ENCODE measurements at regions of chr11 and their contacts with region 1.

Region 1: GRCh38 chr11:43282607-43283440 is 29.0 kb upstream of the API5 start:
- DNase-seq: peak; percentile 60
- ATAC-seq: peak; percentile 21; the same call in 1 of the 2 replicates
- H3K4me3 Mint-ChIP-seq: no peak overlapping the region
- H3K27ac Mint-ChIP-seq: no peak overlapping the region
- H3K4me1 Mint-ChIP-seq: peaks cover 14% of the 10 kb centered on the region
- H3K27me3 Mint-ChIP-seq: no peaks in the 10 kb centered on the region; the same call in 1 of the 2 replicates
- CTCF ChIP-seq: peak; percentile 93

Region 2: DNA sequence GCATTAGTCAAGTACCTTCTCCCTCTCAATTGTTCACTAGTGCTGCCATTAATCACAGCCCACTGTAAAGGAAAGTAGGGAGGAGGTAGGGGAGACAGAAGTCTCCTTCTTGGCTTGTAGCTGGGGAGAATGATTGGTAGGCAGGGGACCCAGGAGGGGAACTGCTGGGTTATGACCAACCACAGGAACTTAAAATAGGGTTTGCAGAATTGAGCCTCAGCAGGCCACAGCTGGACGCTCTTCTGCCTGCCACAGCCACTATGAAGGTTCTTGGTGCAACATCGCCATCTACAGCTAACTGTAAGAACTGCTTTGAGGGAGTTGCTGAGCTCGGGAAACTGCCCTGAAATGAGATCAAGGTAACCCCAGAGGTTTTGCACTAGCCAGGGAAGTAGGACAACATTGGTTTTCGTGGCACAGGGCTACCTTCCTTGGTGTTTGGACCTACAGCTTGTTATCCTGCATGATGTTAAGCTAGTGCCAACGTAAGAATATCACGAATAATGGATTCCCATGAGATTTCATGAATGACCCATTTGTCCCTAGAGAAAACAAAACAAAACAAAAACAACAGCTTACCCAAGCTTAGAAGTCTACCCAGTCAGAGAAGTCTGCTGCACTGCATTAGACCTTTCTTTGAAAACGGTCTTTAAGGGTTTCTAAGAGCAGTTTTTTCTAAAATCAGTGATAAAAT is 758.1 kb before region 1 on chr11:
- CTCF ChIA-PET with region 1: interaction called, 10 read pairs
- POLR2A ChIA-PET with region 1: no interaction called
- DNase-seq: peak; percentile 59
- ATAC-seq: peak; percentile 90
- H3K4me3 Mint-ChIP-seq: no peak overlapping the region
- H3K27ac Mint-ChIP-seq: no peak overlapping the region
- H3K4me1 Mint-ChIP-seq: peaks cover 27% of the 10 kb centered on the region
- H3K27me3 Mint-ChIP-seq: no peaks in the 10 kb centered on the region
- CTCF ChIP-seq: peak; percentile 81

Region 3: GRCh38 chr11:42770444-42771065 is 512.3 kb before region 1 on chr11:
- CTCF ChIA-PET with region 1: interaction called, 12 read pairs
- POLR2A ChIA-PET with region 1: no interaction called
- DNase-seq: peak; percentile 33
- ATAC-seq: peak; percentile 79
- H3K4me3 Mint-ChIP-seq: no peak overlapping the region
- H3K27ac Mint-ChIP-seq: no peak overlapping the region
- H3K4me1 Mint-ChIP-seq: no peaks in the 10 kb centered on the region
- H3K27me3 Mint-ChIP-seq: no peaks in the 10 kb centered on the region; the same call in 1 of the 2 replicates
- CTCF ChIP-seq: peak; percentile 45; the same call in 1 of the 2 replicates

Region 4: DNA sequence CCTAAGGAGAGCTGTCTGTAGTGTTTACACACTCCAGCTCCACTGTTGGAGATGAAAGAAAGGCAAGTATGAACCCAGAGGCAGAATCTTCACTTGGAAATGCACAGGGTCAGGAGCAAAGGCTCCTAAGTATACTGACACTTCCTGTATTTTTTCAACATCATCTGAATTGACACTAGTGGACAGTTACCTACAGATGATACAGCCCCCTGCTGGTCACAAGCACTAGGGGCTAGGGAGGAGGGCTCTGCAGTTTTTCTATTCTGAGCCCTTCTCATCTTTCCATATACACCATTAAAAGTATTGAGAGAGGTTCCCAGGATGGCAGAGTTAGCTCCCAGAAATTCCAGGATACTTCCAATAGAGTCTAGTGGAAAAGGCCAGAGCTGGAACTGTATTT is 261.4 kb before region 1 on chr11:
- CTCF ChIA-PET with region 1: interaction called, 10 read pairs
- POLR2A ChIA-PET with region 1: no interaction called
- DNase-seq: peak; percentile 35
- ATAC-seq: peak; percentile 86
- H3K4me3 Mint-ChIP-seq: no peak overlapping the region
- H3K27ac Mint-ChIP-seq: no peak overlapping the region
- H3K4me1 Mint-ChIP-seq: peaks cover 11% of the 10 kb centered on the region
- H3K27me3 Mint-ChIP-seq: no peaks in the 10 kb centered on the region
- CTCF ChIP-seq: peak; percentile 44

Region 5: DNA sequence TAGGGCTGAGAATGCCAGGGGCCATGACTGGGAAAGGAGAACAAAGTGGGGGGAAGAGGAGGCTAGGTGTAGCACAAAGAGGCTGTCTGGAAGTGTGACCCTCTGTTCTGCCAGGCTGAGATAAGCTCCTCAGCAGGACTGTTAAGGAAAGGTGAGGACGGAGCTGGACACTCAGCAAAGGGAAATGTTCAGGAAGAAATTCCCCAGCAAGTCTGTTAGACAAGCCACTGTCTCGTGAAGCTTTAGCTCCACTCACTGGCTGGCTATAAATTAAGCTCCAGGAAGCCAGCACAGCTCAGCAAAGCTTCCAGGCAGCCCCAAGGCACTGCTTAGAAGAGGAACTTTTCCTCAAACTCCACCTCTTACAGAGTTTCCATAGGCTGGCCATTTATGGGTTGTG is 152.2 kb before region 1 on chr11:
- CTCF ChIA-PET with region 1: interaction called, 22 read pairs
- POLR2A ChIA-PET with region 1: no interaction called
- DNase-seq: peak; percentile 36
- ATAC-seq: peak; percentile 97
- H3K4me3 Mint-ChIP-seq: no peak overlapping the region
- H3K27ac Mint-ChIP-seq: no peak overlapping the region
- H3K4me1 Mint-ChIP-seq: 0 out of 2 replicates have a peak, but pooled peaks cover 3% of the 10 kb centered on the region
- H3K27me3 Mint-ChIP-seq: no peaks in the 10 kb centered on the region
- CTCF ChIP-seq: no peak

Region 6: DNA sequence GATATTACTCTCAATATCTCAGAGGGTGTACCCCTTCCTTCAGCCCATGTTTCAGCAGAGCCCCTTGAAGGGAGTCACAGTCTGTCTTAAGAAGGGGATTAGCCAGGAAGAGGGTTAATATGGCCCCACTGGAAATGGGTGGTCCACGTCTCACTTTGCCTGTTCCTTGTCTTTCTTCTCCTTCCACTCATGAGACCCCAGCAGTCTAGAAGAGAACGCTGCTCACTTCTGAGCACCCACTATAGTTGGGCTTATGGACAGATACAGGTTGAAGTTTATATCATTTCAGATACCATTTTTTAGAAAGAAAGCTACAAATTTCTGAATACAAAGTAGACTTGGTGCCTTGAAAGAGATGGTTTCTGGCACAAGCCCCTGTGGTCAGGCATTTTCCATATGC is 110.3 kb before region 1 on chr11:
- CTCF ChIA-PET with region 1: interaction called, 12 read pairs
- POLR2A ChIA-PET with region 1: no interaction called
- DNase-seq: no peak
- ATAC-seq: no peak
- H3K4me3 Mint-ChIP-seq: no peak overlapping the region
- H3K27ac Mint-ChIP-seq: no peak overlapping the region
- H3K4me1 Mint-ChIP-seq: peaks cover 19% of the 10 kb centered on the region
- H3K27me3 Mint-ChIP-seq: no peaks in the 10 kb centered on the region
- CTCF ChIP-seq: no peak

Region 7: DNA sequence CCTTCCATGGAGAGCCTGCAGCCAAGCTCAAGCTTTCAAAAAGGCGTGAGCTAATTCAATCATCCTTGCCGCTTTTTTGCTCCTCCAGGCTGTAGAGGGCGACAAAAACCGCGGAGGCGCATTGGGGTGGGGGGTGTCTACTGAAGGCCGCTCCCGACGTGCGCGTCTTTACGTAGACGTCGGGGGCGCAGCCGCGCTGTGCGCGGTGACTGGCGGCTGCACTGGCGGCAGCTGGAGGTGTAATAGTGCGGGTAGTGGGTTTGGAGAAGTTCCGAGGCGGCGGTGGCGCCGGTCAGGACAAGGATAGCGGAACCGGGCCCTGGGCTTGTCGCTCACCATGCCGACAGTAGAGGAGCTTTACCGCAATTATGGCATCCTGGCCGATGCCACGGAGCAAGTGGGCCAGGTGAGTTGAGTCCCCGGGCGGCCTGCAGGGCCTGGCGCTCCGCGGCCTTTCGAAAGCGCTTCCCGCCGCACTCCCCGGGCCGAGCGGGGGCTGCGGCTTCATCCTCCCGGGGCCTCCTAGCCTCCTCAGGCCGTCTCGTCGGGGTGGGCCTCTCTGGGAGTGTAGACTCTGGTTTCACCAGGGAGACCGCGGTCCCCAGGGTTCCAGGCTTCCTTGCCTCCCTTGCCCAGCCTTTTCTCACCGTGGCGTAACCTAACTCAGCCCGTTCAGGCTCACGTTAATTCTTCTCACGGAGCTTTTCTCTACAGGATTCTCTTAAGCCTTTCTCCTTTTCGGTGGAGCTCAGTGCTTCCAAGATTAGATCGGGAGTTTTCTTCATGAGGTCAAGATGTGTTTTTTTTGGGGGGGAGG is 29.2 kb after region 1 on chr11 and contains the start of gene API5:
- CTCF ChIA-PET with region 1: interaction called, 13 read pairs
- POLR2A ChIA-PET with region 1: no interaction called
- DNase-seq: peak; percentile 93
- ATAC-seq: peak; percentile 98
- H3K4me3 Mint-ChIP-seq: peak within 1 kb of the TSS; percentile 86
- H3K27ac Mint-ChIP-seq: peak within 1 kb of the TSS; percentile 80
- H3K4me1 Mint-ChIP-seq: peaks cover 17% of the 10 kb centered on the region
- H3K27me3 Mint-ChIP-seq: no peaks in the 10 kb centered on the region
- CTCF ChIP-seq: peak; percentile 50; the same call in 1 of the 2 replicates
- total RNA-seq, gene API5: 138 to 142 TPM (median 140 TPM) in 3 replicates

Region 8: DNA sequence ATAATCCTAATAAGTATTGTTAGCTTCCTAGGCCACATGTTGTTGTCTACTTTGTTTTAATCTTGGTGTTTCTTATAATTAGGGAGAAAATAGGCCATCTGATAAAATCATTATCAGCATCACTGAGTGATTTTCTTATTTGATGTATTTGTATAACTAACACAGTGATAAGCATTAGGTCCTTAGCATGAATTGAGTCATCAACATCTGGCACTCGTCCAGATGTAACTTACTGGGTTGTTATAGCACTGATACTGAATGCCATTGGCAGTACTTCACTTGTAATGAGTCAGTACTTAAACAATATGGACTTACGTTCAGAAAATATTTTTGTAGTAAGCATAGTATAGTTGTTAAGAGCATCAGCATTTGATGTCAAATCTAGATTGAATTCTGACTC is 45.2 kb after region 1 on chr11:
- CTCF ChIA-PET with region 1: no interaction called
- POLR2A ChIA-PET with region 1: no interaction called
- DNase-seq: no peak
- ATAC-seq: no peak
- H3K4me3 Mint-ChIP-seq: no peak overlapping the region
- H3K27ac Mint-ChIP-seq: no peak overlapping the region
- H3K4me1 Mint-ChIP-seq: no peaks in the 10 kb centered on the region
- H3K27me3 Mint-ChIP-seq: no peaks in the 10 kb centered on the region
- CTCF ChIP-seq: no peak

Region 9: DNA sequence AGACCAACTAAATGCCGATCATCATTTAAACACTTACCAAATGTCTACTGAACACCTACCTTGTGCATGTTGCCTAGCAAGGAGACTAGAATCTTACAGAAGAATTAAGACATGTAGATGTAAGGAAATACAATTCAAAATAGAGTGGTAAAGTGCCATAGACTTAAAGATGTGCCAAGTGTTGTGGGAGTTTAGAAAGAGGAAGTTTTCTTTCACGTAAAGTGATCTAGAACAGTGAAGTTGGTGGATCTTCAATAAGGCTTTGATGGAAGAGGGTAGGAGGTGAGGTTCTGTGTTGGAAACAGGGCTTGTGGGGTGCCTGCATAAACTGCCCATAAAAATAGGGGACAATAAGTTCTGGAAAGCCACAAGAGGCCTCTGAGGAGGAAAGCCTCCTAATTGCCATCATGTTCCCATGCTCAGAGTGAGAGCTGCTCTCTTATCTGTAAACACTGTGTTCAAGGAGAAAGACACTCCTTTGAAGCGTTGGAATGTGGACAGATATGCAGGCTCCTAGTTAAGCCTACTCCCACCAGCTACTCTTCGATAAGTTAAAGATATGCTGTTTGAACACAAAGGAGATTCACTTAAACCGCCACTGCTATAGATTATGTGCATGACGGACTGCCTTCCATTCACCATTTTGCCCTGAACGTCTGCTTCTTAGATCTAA is 464.4 kb after region 1 on chr11:
- CTCF ChIA-PET with region 1: no interaction called
- POLR2A ChIA-PET with region 1: no interaction called
- DNase-seq: no peak
- ATAC-seq: no peak
- H3K4me3 Mint-ChIP-seq: no peak overlapping the region
- H3K27ac Mint-ChIP-seq: peak overlapping the region; percentile 33
- H3K4me1 Mint-ChIP-seq: peaks cover 15% of the 10 kb centered on the region
- H3K27me3 Mint-ChIP-seq: no peaks in the 10 kb centered on the region
- CTCF ChIP-seq: no peak